Activated CD4-positive, alpha-beta memory T cell treated with anti-CD3 and anti-CD28 coated beads for 36 hours (primary cell): ENCODE measurements at regions of chr14 and their contacts with region 1.

Region 1: DNA sequence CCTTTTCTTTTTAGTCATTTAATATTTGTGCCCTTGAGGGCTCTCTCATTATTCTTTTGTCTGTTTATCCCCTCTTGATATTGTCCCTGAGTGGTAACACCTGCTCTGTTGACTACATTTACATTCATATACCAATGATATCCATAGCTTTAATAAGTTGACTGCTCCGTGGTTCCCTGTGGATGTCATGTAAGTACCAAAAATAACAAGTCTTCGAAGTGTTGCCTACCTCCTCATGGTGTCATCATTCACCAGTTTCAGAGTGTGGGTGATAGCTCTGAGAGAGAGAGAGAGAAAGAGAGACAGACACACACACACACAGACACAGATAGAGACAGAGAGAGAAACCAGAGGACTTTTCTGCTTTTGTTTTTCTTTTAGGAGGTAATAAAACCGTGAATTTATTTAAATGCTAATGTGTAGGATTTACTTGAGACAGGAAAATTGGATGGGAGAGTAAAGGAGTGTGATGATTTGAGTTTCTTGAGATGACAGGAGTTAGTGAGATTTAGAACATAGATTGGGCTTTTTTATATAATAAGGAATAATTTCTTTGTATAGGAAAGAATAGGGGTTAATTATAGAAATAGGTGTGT is 52.2 kb downstream of the PAPOLA start:
- DNase-seq: no peak
- H3K4me3 Mint-ChIP-seq: no peak overlapping the region
- H3K27ac Mint-ChIP-seq: peak overlapping the region; percentile 43
- H3K4me1 Mint-ChIP-seq: peaks cover 9% of the 10 kb centered on the region
- H3K27me3 Mint-ChIP-seq: no peaks in the 10 kb centered on the region

Region 2: GRCh38 chr14:96614481-96614881 is 60.1 kb after region 1 on chr14:
- CTCF ChIA-PET with region 1: no interaction called
- POLR2A ChIA-PET with region 1: no interaction called
- intact Hi-C with region 1: no loop called
- DNase-seq: no peak
- H3K4me3 Mint-ChIP-seq: no peak overlapping the region
- H3K27ac Mint-ChIP-seq: no peak overlapping the region
- H3K4me1 Mint-ChIP-seq: no peaks in the 10 kb centered on the region
- H3K27me3 Mint-ChIP-seq: peaks cover 22% of the 10 kb centered on the region

Region 3: DNA sequence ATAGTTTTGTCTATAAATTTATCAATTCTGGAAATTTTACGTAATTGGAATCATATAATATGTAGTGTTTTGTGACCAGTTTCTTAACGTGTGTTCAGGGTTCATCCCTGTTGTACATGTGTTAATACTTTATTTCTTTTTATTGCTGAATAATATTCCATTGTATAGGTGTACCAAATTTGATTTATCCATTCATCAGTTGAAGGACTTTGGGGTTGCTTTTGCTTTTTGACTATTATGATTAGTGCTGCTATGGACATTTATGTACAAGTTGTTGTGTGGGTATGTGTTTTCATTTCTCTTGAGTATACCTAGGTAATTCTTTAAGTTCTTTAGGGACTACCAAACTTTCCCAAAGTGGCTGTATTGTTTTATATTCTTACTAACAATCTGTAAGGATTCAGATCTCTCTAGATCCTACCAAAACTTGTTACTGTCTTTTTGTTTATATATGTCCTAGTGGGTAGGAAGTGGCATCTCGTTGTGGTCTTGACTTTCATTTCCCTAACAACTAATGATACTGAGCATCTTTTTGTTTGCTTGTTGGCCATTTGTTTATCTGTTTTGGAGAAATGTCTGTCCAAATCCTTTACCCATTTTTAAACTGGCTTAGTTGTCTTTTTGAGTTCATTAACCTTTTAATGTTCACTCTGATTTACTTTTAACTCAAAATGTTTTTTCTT is 257.7 kb after region 1 on chr14:
- CTCF ChIA-PET with region 1: no interaction called
- POLR2A ChIA-PET with region 1: interaction called, 10 read pairs
- intact Hi-C with region 1: no loop called
- DNase-seq: no peak
- H3K4me3 Mint-ChIP-seq: no peak overlapping the region
- H3K27ac Mint-ChIP-seq: no peak overlapping the region
- H3K4me1 Mint-ChIP-seq: peaks cover 38% of the 10 kb centered on the region
- H3K27me3 Mint-ChIP-seq: no peaks in the 10 kb centered on the region